ENCODE measurements at regions of chr3 and their contacts with region 1.

Region 1: GRCh38 chr3:2078821-2079220 is 19.8 kb upstream of the CNTN4 start:
- DNase-seq: no peak
- H3K4me3 ChIP-seq: no peak overlapping the region
- H3K27ac ChIP-seq: peak overlapping the region; percentile 76 to 84
- H3K4me1 ChIP-seq: peaks cover 3 to 15% of the 10 kb centered on the region in 2 donors
- H3K27me3 ChIP-seq: no peaks in the 10 kb centered on the region
- CTCF ChIP-seq: no peak

Region 2: GRCh38 chr3:2001306-2002108 is 77.3 kb before region 1 on chr3:
- intact Hi-C with region 1: no loop called
- DNase-seq: no peak
- H3K4me3 ChIP-seq: no peak overlapping the region
- H3K27ac ChIP-seq: no peak overlapping the region
- H3K4me1 ChIP-seq: no peaks in the 10 kb centered on the region
- H3K27me3 ChIP-seq: no peaks in the 10 kb centered on the region
- CTCF ChIP-seq: no peak

Region 3: DNA sequence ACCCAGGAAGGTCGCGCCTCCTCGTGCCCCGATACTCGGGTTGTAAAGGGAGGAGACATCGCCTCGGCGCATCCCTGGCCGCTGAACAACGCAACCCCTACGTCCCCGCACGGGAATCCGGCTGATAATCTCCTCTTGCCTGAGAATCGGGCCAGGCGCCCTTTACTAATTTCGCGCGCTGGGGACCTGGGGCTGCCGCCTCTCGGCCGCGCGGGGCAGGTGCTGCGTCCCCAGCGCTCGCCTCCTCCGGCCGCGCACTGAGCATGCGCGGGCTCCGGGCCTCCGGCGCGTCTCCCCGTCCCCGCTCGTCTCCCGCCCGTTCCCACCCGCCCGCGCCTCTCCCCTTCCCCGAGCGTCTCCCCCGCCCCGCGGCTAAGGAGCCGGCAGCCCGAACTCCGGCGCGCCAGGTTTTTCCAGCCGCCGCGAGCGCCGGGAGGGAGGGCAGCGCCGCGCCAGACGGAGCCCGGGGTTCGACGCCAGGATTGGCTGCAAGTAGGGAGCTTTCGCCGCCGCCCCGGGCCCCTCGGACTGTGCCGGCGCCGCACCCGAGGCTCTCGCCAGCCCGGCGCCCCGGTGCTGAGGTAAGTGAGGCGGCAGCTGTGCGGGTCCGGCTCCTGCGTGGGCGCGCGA is 19.7 kb after region 1 on chr3 and contains the start of gene CNTN4:
- intact Hi-C with region 1: loop called (anchors 1 kb)
- DNase-seq: peak; percentile 23 to 88
- H3K4me3 ChIP-seq: peak within 1 kb of the TSS; percentile 51 to 77
- H3K27ac ChIP-seq: peak within 1 kb of the TSS; percentile 82 to 93
- H3K4me1 ChIP-seq: no peaks in the 10 kb centered on the region
- H3K27me3 ChIP-seq: no peaks in the 10 kb centered on the region
- CTCF ChIP-seq: peak; percentile 32 to 57 (median 47)
- total RNA-seq, gene CNTN4: 37.5 TPM